Activated naive CD8-positive, alpha-beta T cell treated with anti-CD3 and anti-CD28 coated beads, Interleukin-2, amount 10 ng/mL, durations not matched to agents 7 days and 5 days (primary cell): ENCODE measurements at regions of chr18 and their contacts with region 1.

Region 1: GRCh38 chr18:59918320-59918755 is 18.5 kb downstream of the PMAIP1 start:
- DNase-seq: no peak
- ATAC-seq: peak; percentile 51
- H3K4me3 Mint-ChIP-seq: no peak overlapping the region
- H3K27ac Mint-ChIP-seq: peak overlapping the region; percentile 41
- H3K4me1 Mint-ChIP-seq: peaks cover 27% of the 10 kb centered on the region
- H3K27me3 Mint-ChIP-seq: peaks cover 15% of the 10 kb centered on the region

Region 2: GRCh38 chr18:59582395-59582794 is 335.9 kb before region 1 on chr18:
- POLR2A ChIA-PET with region 1: no interaction called
- DNase-seq: no peak
- ATAC-seq: no peak
- H3K4me3 Mint-ChIP-seq: no peak overlapping the region
- H3K27ac Mint-ChIP-seq: no peak overlapping the region
- H3K4me1 Mint-ChIP-seq: no peaks in the 10 kb centered on the region
- H3K27me3 Mint-ChIP-seq: no peaks in the 10 kb centered on the region

Region 3: DNA sequence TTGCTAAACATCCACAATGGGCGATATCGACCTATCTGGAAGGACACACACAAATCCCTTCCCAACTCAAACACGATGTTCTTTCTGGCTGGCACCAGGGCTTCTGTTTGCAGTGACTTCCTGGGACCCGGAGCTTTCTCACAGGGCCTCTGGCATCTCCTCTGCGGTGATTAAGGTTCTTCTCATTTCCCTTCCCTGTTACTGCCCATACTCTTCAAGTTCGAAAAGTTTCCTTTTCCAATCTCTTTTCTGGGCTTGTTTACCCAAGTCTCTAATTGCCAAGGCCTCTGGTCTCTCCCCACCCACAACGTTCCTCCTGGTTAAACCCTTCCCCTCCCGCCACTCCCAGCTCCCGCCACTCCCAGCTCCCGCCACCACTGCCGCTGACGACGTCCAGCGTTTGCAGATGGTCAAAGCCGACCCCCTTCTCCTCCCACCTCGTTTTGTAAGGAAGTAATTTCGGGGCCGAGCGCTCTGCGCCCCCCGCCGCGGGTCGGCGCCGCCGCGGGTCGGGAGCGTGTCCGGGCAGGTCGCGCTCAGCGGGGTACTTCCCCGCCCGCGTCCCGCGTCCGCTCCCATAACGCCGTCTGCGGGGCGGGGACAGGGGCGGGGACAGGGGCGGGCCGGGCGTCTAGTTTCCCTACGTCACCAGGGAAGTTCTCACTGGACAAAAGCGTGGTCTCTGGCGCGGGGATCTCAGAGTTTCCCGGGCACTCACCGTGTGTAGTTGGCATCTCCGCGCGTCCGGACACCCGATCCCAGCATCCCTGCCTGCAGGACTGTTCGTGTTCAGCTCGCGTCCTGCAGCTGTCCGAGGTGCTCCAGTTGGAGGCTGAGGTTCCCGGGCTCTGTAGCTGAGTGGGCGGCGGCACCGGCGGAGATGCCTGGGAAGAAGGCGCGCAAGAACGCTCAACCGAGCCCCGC is 18.8 kb before region 1 on chr18 and contains the start of gene PMAIP1:
- POLR2A ChIA-PET with region 1: interaction called, 28 read pairs
- DNase-seq: peak; percentile 88
- ATAC-seq: peak; percentile 82
- H3K4me3 Mint-ChIP-seq: peak within 1 kb of the TSS; percentile 99
- H3K27ac Mint-ChIP-seq: peak within 1 kb of the TSS; percentile 99
- H3K4me1 Mint-ChIP-seq: peaks cover 32% of the 10 kb centered on the region
- H3K27me3 Mint-ChIP-seq: no peaks in the 10 kb centered on the region
- total RNA-seq, gene PMAIP1: 25.3 to 26.7 TPM

Region 4: DNA sequence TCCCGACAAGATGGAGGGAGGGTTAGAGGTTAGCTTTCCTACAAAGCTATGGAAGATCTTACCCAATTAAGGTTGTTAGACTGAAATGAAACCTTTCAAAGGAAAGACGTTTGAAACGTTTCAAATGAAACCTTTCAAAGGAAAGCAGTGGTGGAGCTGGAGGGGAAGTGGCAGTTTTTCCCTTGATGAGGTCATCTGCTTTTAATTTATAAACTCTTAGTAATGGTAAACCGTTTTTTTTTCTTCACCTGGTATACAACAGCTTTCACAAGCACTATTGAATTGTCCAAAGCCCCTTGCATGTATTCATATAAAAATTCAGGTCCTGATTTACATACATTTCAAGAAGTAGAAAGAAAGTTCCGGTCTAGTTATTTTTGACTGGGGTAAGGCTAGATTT is 11.2 kb before region 1 on chr18:
- POLR2A ChIA-PET with region 1: interaction called, 12 read pairs
- DNase-seq: no peak
- ATAC-seq: no peak
- H3K4me3 Mint-ChIP-seq: peak overlapping the region; percentile 58
- H3K27ac Mint-ChIP-seq: peak overlapping the region; percentile 71
- H3K4me1 Mint-ChIP-seq: peaks cover 47% of the 10 kb centered on the region
- H3K27me3 Mint-ChIP-seq: no peaks in the 10 kb centered on the region